Astrocyte of the cerebellum (primary cell): ENCODE measurements at regions of chr12 and their contacts with region 1.

Region 1: GRCh38 chr12:56127888-56128669 is at the start of gene ESYT1:
- DNase-seq: peak; percentile 100
- H3K4me3 ChIP-seq: peak within 1 kb of the TSS; percentile 92
- CTCF ChIP-seq: no peak

Region 2: DNA sequence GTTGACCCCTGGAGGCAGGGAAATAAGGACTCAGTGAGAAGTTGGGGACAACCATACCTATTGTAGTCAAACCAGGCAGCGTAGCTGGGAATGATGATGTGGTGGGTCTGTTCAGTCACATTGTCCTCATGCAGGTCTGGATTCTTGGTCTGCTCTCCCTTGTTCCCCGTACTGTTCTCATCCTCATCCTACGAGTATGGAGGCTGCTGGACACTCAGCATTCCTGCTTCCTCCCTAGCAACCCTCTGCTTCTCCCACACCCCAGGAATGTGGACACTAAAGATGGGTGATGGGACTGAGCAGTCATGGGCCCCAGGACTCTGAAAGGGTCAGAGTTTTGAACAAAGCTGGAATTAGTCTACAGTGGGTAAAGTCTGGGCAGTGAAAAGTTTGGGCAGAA is 50.3 kb after region 1 on chr12:
- in situ Hi-C with region 1: loop called (anchors 10 kb)
- DNase-seq: no peak
- H3K4me3 ChIP-seq: no peak overlapping the region
- CTCF ChIP-seq: no peak

Region 3: GRCh38 chr12:56224102-56224701 is 96.1 kb after region 1 on chr12 and contains the start of gene NABP2:
- in situ Hi-C with region 1: loop called (anchors 5 kb)
- DNase-seq: peak; percentile 96
- H3K4me3 ChIP-seq: peak within 1 kb of the TSS; percentile 75
- CTCF ChIP-seq: peak; percentile 94